B cell (primary cell): ENCODE measurements at regions of chr17 and their contacts with region 1.

Region 1: DNA sequence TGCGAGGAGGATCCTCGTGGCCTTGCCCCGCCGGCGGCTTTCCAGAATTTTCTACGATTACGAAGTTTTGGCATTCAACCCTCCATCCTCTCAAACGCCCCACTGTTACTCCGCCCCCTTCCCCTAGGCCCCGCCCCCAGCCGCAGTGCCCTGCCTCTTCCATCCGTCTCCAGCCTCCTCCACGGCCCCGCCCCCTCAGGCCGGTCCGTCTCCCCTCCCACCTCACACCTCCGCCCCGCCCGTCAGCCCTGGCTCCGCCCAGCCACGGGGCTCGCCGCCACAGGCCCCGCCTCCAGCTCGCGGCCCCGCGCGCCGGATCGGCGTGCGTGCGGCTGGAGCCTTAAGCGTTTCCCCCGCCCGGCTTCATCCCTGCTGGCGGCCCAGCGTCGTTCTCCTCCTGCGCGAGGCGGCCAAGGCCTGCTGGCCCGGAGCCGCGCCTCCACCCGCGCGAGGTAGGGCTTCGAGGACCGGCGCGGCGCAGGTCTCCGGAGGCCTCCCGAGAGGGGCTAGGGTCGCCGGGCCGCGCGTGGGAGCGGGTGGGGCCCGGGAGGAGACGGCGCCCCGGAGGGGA is at the starts of genes C17orf67 and DGKE:
- DNase-seq: peak; percentile 98
- ATAC-seq: peak; percentile 91
- H3K4me3 ChIP-seq: peak within 1 kb of the TSS; percentile 27 to 86 (median 76)
- H3K4me3 Mint-ChIP-seq: peak within 1 kb of the TSS; percentile 95
- H3K27ac ChIP-seq: peak within 1 kb of the TSS; percentile 45 to 78
- H3K27ac Mint-ChIP-seq: peak within 1 kb of the TSS; percentile 93
- H3K4me1 ChIP-seq: peaks cover 21 to 24% of the 10 kb centered on the region in 2 donors
- H3K4me1 Mint-ChIP-seq: peaks cover 43% of the 10 kb centered on the region
- H3K27me3 ChIP-seq: no peaks in the 10 kb centered on the region
- H3K27me3 Mint-ChIP-seq: no peaks in the 10 kb centered on the region
- CTCF ChIP-seq: no peak
- total RNA-seq, gene C17orf67: 10.0 and 10.6 TPM in 2 replicates
- total RNA-seq, gene DGKE: 28.1 and 33.9 TPM in 2 replicates

Region 2: GRCh38 chr17:56863974-56864373 is 30.1 kb after region 1 on chr17:
- CTCF ChIA-PET with region 1: no interaction called
- POLR2A ChIA-PET with region 1: no interaction called
- intact Hi-C with region 1: no loop called
- DNase-seq: no peak
- ATAC-seq: no peak
- H3K4me3 ChIP-seq: no peak overlapping the region
- H3K4me3 Mint-ChIP-seq: no peak overlapping the region
- H3K27ac ChIP-seq: no peak overlapping the region
- H3K27ac Mint-ChIP-seq: no peak overlapping the region
- H3K4me1 ChIP-seq: no peaks in the 10 kb centered on the region
- H3K4me1 Mint-ChIP-seq: peaks cover 7% of the 10 kb centered on the region
- H3K27me3 ChIP-seq: no peaks in the 10 kb centered on the region
- H3K27me3 Mint-ChIP-seq: no peaks in the 10 kb centered on the region
- CTCF ChIP-seq: no peak

Region 3: GRCh38 chr17:56908001-56908542 is 74.2 kb after region 1 on chr17:
- CTCF ChIA-PET with region 1: no interaction called
- POLR2A ChIA-PET with region 1: interaction called, 27 read pairs
- intact Hi-C with region 1: loop called (anchors 1 kb)
- DNase-seq: peak; percentile 79
- ATAC-seq: peak; percentile 96
- H3K4me3 ChIP-seq: peak overlapping the region in 1 of 5 experiments; percentile 22
- H3K4me3 Mint-ChIP-seq: peak overlapping the region; percentile 80
- H3K27ac ChIP-seq: peak overlapping the region; percentile 68 to 76
- H3K27ac Mint-ChIP-seq: peak overlapping the region; percentile 94
- H3K4me1 ChIP-seq: peaks cover 54 to 64% of the 10 kb centered on the region in 2 donors
- H3K4me1 Mint-ChIP-seq: peaks cover 68% of the 10 kb centered on the region
- H3K27me3 ChIP-seq: no peaks in the 10 kb centered on the region
- H3K27me3 Mint-ChIP-seq: no peaks in the 10 kb centered on the region
- CTCF ChIP-seq: no peak

Region 4: DNA sequence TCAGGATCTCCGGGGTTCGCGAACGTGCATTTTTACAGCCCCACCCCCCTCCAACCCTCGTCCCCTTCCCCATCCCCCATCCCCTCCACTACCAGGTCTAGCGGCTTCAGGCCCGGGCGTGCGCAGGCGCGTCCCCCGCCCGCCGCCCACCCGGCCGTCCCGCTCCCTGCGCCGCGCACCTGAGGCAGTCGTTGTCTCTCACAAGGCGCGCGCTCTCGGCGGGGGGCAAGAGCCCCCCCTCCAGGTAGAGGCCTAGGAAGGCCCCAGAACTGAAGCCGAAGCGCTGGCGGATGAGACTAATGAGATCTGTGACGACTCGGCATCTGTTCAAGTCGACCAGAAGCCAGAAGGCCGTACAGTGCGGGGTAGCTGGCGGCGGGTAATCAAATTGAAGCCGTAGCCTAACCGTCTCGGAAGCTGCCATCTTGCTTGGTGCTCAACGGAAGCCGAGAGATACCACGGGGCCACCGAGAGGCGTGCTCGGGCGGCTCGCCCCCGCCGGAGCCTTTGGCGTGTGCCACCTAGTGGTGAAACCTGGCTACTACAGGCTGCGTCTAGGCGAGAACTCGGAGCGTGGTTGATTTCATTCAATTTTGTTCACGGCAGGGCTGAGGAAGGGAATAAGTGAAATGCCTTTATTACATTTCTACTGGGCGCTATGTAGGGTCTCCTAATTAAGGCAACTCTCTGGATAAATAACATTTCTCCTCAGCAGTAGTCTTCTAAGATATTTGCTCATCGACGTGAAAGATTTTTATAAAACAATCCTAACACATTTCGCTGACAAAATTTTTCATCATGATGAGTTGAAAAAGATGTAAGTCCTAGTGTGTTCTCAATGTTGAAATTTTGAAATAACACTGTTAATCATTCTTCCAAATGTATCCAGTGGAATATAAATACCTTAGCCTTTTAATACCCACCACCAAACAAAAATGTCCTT is 127.0 kb after region 1 on chr17 and contains the start of gene COIL:
- CTCF ChIA-PET with region 1: no interaction called
- POLR2A ChIA-PET with region 1: no interaction called
- intact Hi-C with region 1: loop called (anchors 1 kb)
- DNase-seq: peak; percentile 95
- ATAC-seq: peak; percentile 100
- H3K4me3 ChIP-seq: peak within 1 kb of the TSS in 4 of 5 experiments; percentile 78 to 89 (median 83)
- H3K4me3 Mint-ChIP-seq: peak within 1 kb of the TSS; percentile 91
- H3K27ac ChIP-seq: peak within 1 kb of the TSS; percentile 86 to 90
- H3K27ac Mint-ChIP-seq: peak within 1 kb of the TSS; percentile 85
- H3K4me1 ChIP-seq: peaks cover 11 to 13% of the 10 kb centered on the region in 2 donors
- H3K4me1 Mint-ChIP-seq: peaks cover 21% of the 10 kb centered on the region
- H3K27me3 ChIP-seq: no peaks in the 10 kb centered on the region
- H3K27me3 Mint-ChIP-seq: no peaks in the 10 kb centered on the region
- CTCF ChIP-seq: peak; percentile 98
- total RNA-seq, gene COIL: 19.8 and 22.9 TPM in 2 replicates

Region 5: DNA sequence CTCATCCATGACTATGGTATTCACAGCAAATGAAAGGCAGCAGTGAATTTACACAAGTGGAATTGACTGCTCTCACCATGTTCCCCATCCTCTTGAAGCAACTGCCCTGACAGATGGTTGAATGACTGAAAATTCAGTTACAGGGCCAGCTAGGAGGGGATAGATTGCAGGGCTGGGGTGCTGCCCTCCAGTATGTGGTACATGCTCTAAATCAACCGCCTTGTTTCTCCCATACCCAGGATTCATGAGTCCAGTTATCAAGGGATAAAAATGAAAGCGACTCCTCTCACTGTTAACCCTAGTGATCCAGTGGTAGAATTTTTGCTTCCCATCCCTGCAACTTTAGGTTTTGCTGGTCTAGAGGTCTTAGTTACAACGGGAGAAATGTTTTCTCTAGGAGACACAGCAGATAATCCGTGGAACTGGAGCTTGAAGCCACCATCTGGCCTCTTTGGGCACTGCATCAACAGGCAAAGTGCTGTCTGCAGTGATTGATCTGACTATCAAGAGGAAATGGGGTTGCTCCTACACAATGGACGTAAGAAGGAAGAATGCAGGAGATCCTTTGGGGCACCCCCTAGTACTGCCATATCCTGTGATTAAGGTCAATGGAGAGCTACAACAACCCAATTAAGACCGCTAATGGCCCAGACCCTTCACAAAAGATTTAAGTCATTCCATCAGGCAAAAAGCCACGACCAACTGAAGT is 176.0 kb after region 1 on chr17:
- CTCF ChIA-PET with region 1: no interaction called
- POLR2A ChIA-PET with region 1: no interaction called
- intact Hi-C with region 1: loop called (anchors 1 kb)
- DNase-seq: peak; percentile 72
- ATAC-seq: peak; percentile 57
- H3K4me3 ChIP-seq: peak overlapping the region in 3 of 5 experiments; percentile 41 to 54 (median 50)
- H3K4me3 Mint-ChIP-seq: peak overlapping the region; percentile 49
- H3K27ac ChIP-seq: no peak overlapping the region
- H3K27ac Mint-ChIP-seq: peak overlapping the region; percentile 32
- H3K4me1 ChIP-seq: peaks cover 20 to 21% of the 10 kb centered on the region in 2 donors
- H3K4me1 Mint-ChIP-seq: peaks cover 39% of the 10 kb centered on the region
- H3K27me3 ChIP-seq: no peaks in the 10 kb centered on the region
- H3K27me3 Mint-ChIP-seq: no peaks in the 10 kb centered on the region
- CTCF ChIP-seq: peak; percentile 81

Region 6: GRCh38 chr17:58006924-58007780 is 1173.3 kb after region 1 on chr17 and contains the start of gene SRSF1:
- CTCF ChIA-PET with region 1: no interaction called
- POLR2A ChIA-PET with region 1: no interaction called
- intact Hi-C with region 1: loop called (anchors 5 kb)
- DNase-seq: peak; percentile 99
- ATAC-seq: peak; percentile 87
- H3K4me3 ChIP-seq: peak within 1 kb of the TSS; percentile 83 to 100 (median 96)
- H3K4me3 Mint-ChIP-seq: peak within 1 kb of the TSS; percentile 100
- H3K27ac ChIP-seq: peak within 1 kb of the TSS; percentile 93 to 95
- H3K27ac Mint-ChIP-seq: peak within 1 kb of the TSS; percentile 100
- H3K4me1 ChIP-seq: peaks cover 25 to 38% of the 10 kb centered on the region in 2 donors
- H3K4me1 Mint-ChIP-seq: peaks cover 46% of the 10 kb centered on the region
- H3K27me3 ChIP-seq: no peaks in the 10 kb centered on the region
- H3K27me3 Mint-ChIP-seq: no peaks in the 10 kb centered on the region
- CTCF ChIP-seq: no peak
- total RNA-seq, gene SRSF1: 221 and 250 TPM in 2 replicates